ENCODE measurements at regions of chr3 and their contacts with region 1.

Region 1: GRCh38 chr3:98901392-98902350 is at the start of gene DCBLD2:
- DNase-seq: peak; percentile 95
- H3K4me3 Mint-ChIP-seq: peak within 1 kb of the TSS; percentile 78
- H3K27ac Mint-ChIP-seq: no peak within 1 kb of the TSS
- H3K4me1 Mint-ChIP-seq: peaks cover 11% of the 10 kb centered on the region
- H3K27me3 Mint-ChIP-seq: peaks cover 5% of the 10 kb centered on the region
- total RNA-seq, gene DCBLD2: 1.2 to 1.6 TPM

Region 2: DNA sequence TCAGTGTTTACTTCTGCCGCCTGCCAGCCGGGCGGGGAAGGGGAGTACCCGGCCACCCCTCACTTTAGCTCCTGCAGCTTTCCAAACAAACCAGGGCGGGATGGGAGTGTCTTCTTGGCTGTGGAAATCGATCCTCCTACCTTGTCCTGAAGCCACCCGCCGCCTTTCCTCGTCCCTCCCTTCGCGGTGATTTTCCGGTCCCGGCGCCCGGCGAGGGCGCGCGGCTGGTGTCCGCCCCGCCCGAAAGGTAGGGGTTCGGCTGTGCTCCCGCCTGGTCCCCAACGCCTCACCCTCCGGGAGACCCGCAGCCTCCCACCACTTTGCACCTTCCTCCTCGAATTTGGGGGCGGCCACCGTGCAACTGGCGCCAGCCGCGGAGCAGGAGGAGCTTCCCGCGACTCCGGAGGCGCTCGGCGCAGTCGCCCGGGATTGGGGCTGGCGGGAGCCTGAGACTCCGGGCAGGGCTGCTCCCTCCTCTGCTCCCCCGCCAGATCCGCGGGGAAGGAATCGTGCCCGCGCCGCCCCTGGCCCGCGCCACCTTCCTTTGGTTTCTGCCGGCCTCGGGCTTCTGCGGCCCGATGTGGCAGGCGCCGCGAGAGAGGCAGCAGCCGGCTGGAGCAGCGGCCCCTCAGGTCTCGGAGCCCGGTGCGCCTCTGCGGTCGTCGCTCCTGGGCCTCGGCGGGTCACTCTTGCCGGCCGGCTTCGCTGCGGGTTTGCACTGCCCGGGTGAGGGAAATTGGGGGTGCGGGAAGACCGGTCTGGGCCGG is 169.2 kb before region 1 on chr3:
- CTCF ChIA-PET with region 1: no interaction called
- POLR2A ChIA-PET with region 1: no interaction called
- intact Hi-C with region 1: loop called (anchors 5 kb)
- DNase-seq: peak; percentile 17
- H3K4me3 Mint-ChIP-seq: peak overlapping the region; percentile 52
- H3K27ac Mint-ChIP-seq: no peak overlapping the region
- H3K4me1 Mint-ChIP-seq: peaks cover 15% of the 10 kb centered on the region
- H3K27me3 Mint-ChIP-seq: peaks cover 55% of the 10 kb centered on the region